Ovary (tissue), 10 donors: ENCODE measurements at regions of chr11 and their contacts with region 1.

Region 1: GRCh38 chr11:106021967-106022794 is at the start of gene MSANTD4:
- DNase-seq: peak; percentile 98 to 99 (median 99)
- H3K4me3 ChIP-seq: peak within 1 kb of the TSS; percentile 67
- H3K27ac ChIP-seq: peak within 1 kb of the TSS in 1 of 2 donors; percentile 53
- H3K4me1 ChIP-seq: no peaks in the 10 kb centered on the region
- H3K27me3 ChIP-seq: no peaks in the 10 kb centered on the region
- CTCF ChIP-seq: no peak
- EP300 ChIP-seq: no peak
- POLR2A ChIP-seq: no peak
- total RNA-seq, gene MSANTD4: 12.6 to 21.0 (median 17.5) TPM

Region 2: DNA sequence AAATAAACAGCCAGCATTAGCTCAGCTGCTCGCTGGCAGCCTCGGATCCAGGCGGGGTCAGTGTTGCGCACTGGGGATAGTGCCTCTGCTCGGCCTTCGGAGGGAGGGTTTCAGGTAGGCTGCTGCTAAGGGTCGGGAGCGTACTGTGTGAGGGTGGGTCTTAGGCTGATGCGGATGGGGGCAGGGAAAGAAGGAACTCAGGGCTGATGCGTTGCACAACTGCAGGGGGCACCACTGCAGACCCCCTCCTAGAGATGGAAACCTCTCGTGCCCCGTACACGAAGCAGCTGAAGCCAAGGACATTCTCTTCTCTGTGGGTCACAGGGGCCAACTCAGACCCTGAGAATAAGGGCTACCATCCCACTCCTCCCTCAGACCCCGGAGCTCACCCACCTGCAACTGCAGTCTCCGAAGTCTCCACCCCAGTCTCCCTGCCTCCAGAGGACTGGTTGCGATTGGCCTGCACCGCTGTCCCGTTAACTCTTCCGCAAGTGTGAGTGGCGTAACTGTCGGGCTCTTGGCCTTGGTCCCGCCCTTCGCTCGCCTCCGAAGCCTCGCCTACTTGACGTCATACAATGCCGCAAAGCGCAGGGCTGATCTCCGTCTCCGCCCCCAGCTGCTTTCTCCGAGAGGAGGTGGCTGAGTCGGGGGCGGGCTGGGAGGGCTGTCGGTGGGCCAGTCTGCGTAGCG is 54.9 kb after region 1 on chr11 and contains the start of gene KBTBD3:
- intact Hi-C with region 1: loop called in 2 of 4 experiments (anchors 5 kb)
- DNase-seq: peak; percentile 98 to 99 (median 99)
- H3K4me3 ChIP-seq: peak within 1 kb of the TSS; percentile 69
- H3K27ac ChIP-seq: peak within 1 kb of the TSS; percentile 88 to 94
- H3K4me1 ChIP-seq: peaks cover 1% of the 10 kb centered on the region
- H3K27me3 ChIP-seq: no peaks in the 10 kb centered on the region
- CTCF ChIP-seq: peak in 2 of 3 donors; percentile 36 to 52
- EP300 ChIP-seq: no peak
- POLR2A ChIP-seq: peak; percentile 90
- total RNA-seq, gene KBTBD3: 5.1 to 11.9 (median 8.3) TPM